AG04450 (cell line): ENCODE measurements at regions of chr11 and their contacts with region 1.

Region 1: GRCh38 chr11:20397281-20397680 is 9.8 kb downstream of the PRMT3 start:
- DNase-seq: peak; percentile 18
- H3K4me3 ChIP-seq: no peak overlapping the region
- H3K27ac ChIP-seq: no peak overlapping the region
- H3K27me3 ChIP-seq: no peaks in the 10 kb centered on the region
- CTCF ChIP-seq: peak; percentile 70

Region 2: GRCh38 chr11:20407344-20407743 is 10.1 kb after region 1 on chr11:
- CTCF ChIA-PET with region 1: interaction called, 25 read pairs
- POLR2A ChIA-PET with region 1: no interaction called
- DNase-seq: no peak
- H3K4me3 ChIP-seq: no peak overlapping the region
- H3K27ac ChIP-seq: no peak overlapping the region
- H3K27me3 ChIP-seq: no peaks in the 10 kb centered on the region
- CTCF ChIP-seq: no peak

Region 3: GRCh38 chr11:20415432-20415831 is 18.2 kb after region 1 on chr11:
- CTCF ChIA-PET with region 1: interaction called, 25 read pairs
- POLR2A ChIA-PET with region 1: no interaction called
- DNase-seq: no peak
- H3K4me3 ChIP-seq: no peak overlapping the region
- H3K27ac ChIP-seq: no peak overlapping the region
- H3K27me3 ChIP-seq: no peaks in the 10 kb centered on the region
- CTCF ChIP-seq: no peak

Region 4: GRCh38 chr11:20429216-20429615 is 31.9 kb after region 1 on chr11:
- CTCF ChIA-PET with region 1: interaction called, 18 read pairs
- POLR2A ChIA-PET with region 1: no interaction called
- DNase-seq: no peak
- H3K4me3 ChIP-seq: no peak overlapping the region
- H3K27ac ChIP-seq: no peak overlapping the region
- H3K27me3 ChIP-seq: no peaks in the 10 kb centered on the region
- CTCF ChIP-seq: no peak

Region 5: GRCh38 chr11:20443596-20443995 is 46.3 kb after region 1 on chr11:
- CTCF ChIA-PET with region 1: interaction called, 59 read pairs
- POLR2A ChIA-PET with region 1: no interaction called
- DNase-seq: no peak
- H3K4me3 ChIP-seq: no peak overlapping the region
- H3K27ac ChIP-seq: no peak overlapping the region
- H3K27me3 ChIP-seq: no peaks in the 10 kb centered on the region
- CTCF ChIP-seq: peak; percentile 51

Region 6: GRCh38 chr11:20450829-20451228 is 53.5 kb after region 1 on chr11:
- CTCF ChIA-PET with region 1: interaction called, 10 read pairs
- POLR2A ChIA-PET with region 1: no interaction called
- DNase-seq: no peak
- H3K4me3 ChIP-seq: no peak overlapping the region
- H3K27ac ChIP-seq: no peak overlapping the region
- H3K27me3 ChIP-seq: no peaks in the 10 kb centered on the region
- CTCF ChIP-seq: no peak

Region 7: GRCh38 chr11:20609727-20610707 is 212.7 kb after region 1 on chr11:
- CTCF ChIA-PET with region 1: interaction called, 94 read pairs
- POLR2A ChIA-PET with region 1: no interaction called
- DNase-seq: peak; percentile 13
- H3K4me3 ChIP-seq: no peak overlapping the region
- H3K27ac ChIP-seq: no peak overlapping the region
- H3K27me3 ChIP-seq: peaks cover 30% of the 10 kb centered on the region
- CTCF ChIP-seq: peak; percentile 95